Tibial artery (tissue), 4 donors: ENCODE measurements at regions of chr9 and their contacts with region 1.

Region 1: DNA sequence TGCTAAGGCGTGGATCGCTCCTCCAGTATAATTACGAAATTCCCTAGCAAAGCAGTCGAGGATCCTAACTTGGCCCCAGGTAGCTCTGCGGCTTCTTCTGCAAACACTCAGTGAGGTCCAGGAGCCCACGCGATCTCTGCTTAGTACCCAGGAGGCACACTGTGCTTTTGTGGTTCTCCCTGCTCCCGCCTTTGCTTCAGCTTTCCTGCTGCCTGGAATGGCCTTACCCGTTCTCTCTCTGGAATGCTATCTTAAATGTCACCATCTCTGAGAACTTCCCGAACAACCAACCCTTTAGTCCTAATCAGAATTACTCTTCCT is 639 bp downstream of the INVS start:
- DNase-seq: peak in 1 of 2 donors; percentile 27
- H3K4me3 ChIP-seq: peak overlapping the region; percentile 76 to 89
- H3K27ac ChIP-seq: peak overlapping the region; percentile 87 to 88
- H3K4me1 ChIP-seq: peaks cover 0 to 38% (median 13%) of the 10 kb centered on the region in 4 donors
- H3K27me3 ChIP-seq: no peaks in the 10 kb centered on the region
- CTCF ChIP-seq: no peak

Region 2: GRCh38 chr9:100322954-100323536 is 223.4 kb after region 1 on chr9:
- intact Hi-C with region 1: loop called (anchors 10 kb)
- DNase-seq: no peak
- H3K4me3 ChIP-seq: no peak overlapping the region
- H3K27ac ChIP-seq: no peak overlapping the region
- H3K4me1 ChIP-seq: no peaks in the 10 kb centered on the region
- H3K27me3 ChIP-seq: no peaks in the 10 kb centered on the region
- CTCF ChIP-seq: peak; percentile 47 to 62

Region 3: GRCh38 chr9:101486693-101487442 is 1387.2 kb after region 1 on chr9:
- intact Hi-C with region 1: no loop called
- DNase-seq: peak; percentile 28 to 78
- H3K4me3 ChIP-seq: peak overlapping the region; percentile 89 to 92
- H3K27ac ChIP-seq: peak overlapping the region; percentile 93 to 98
- H3K4me1 ChIP-seq: peaks cover 0 to 28% (median 7%) of the 10 kb centered on the region in 4 donors
- H3K27me3 ChIP-seq: no peaks in the 10 kb centered on the region
- CTCF ChIP-seq: peak in 1 of 2 experiments; percentile 6